Activated CD4-positive, alpha-beta T cell treated with anti-CD3 and anti-CD28 coated beads for 36 hours (primary cell): ENCODE measurements at regions of chr12 and their contacts with region 1.

Region 1: DNA sequence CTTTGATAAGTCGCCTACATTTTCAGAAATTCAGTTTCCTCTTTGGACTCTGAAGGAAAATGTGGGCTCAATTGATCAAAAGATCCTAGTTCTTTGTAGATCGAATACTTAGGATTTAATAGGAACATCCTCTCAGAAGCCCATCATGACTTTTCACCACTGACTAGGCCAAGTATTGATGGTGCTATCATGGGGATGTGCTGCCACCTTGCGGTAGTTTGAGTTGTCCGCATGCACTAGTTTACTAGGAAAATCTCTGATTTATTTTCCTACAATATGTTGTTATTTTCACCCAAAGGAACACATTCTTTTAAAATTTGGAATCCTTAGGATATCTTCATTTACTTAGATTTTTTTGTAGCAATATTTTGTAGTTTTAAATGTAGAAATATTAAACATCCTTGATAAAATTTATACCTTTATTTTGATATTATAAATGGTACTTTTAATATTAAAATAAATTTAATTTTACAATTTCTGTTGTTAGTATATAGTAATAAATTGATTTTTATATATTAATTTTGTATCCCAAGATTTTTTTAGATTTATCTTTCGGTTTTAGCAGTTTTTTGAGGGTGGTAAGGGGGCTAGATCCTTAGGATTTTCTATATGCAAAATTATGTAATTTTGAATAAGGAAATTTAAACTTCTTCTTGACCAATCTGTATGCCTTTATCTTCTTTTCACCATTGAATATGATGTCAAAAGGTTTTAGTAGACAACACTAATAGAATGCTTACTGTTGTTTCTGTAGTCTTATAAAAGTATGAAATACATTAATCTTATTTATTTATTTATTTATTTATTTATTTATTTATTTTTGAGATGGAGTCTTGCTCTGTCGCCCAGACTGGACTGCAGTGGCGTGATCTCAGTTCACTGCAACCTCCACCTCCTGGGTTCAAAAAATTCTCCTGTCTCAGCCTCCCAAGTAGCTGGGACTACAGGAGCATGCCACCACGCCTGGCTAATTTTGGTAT is 52.9 kb upstream of the OR9K2 start:
- DNase-seq: peak; percentile 89
- ATAC-seq: peak; percentile 61
- H3K4me3 Mint-ChIP-seq: no peak overlapping the region
- H3K27ac Mint-ChIP-seq: no peak overlapping the region
- H3K4me1 Mint-ChIP-seq: peaks cover 4% of the 10 kb centered on the region
- H3K27me3 Mint-ChIP-seq: peaks cover 20% of the 10 kb centered on the region

Region 2: DNA sequence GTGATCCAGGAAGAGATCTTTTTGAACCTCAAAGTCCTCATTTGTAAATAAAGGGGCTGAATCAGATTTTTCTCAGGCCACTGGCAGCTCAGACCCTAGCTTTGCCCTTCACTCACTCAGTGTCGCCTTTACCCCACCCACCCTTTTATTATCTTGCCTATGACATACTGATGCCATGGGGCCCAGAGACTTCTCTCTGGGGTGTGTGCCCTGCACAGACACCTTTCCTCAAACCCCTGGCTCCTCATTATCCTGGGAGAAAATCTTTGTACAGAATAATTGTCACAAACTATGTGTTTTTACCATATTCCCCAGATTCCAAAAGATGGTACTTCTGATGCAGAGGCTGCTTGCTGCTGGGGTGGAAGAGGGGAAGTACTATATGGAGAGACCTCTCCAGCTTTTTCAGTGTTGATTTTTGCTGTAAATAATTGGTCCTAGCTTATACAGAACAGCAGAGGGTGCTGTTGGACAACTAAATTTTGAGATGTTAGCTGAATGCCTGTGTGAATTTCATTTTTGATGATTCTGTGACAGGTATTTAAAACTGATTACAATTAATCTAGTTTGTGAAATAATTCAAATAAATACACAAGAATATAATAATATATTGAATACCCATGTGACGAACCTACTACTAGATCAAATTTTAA is 371.3 kb before region 1 on chr12:
- CTCF ChIA-PET with region 1: interaction called, 42 read pairs
- POLR2A ChIA-PET with region 1: no interaction called
- intact Hi-C with region 1: loop called (anchors 1 kb)
- DNase-seq: no peak
- ATAC-seq: peak; percentile 58
- H3K4me3 Mint-ChIP-seq: no peak overlapping the region
- H3K27ac Mint-ChIP-seq: no peak overlapping the region
- H3K4me1 Mint-ChIP-seq: no peaks in the 10 kb centered on the region
- H3K27me3 Mint-ChIP-seq: no peaks in the 10 kb centered on the region

Region 3: GRCh38 chr12:54759751-54760150 is 313.6 kb before region 1 on chr12:
- CTCF ChIA-PET with region 1: interaction called, 28 read pairs
- POLR2A ChIA-PET with region 1: no interaction called
- intact Hi-C with region 1: loop called in 1 of 2 experiments (anchors 1 kb)
- DNase-seq: peak; percentile 22
- ATAC-seq: no peak
- H3K4me3 Mint-ChIP-seq: no peak overlapping the region
- H3K27ac Mint-ChIP-seq: no peak overlapping the region
- H3K4me1 Mint-ChIP-seq: peaks cover 8% of the 10 kb centered on the region
- H3K27me3 Mint-ChIP-seq: peaks cover 7% of the 10 kb centered on the region

Region 4: DNA sequence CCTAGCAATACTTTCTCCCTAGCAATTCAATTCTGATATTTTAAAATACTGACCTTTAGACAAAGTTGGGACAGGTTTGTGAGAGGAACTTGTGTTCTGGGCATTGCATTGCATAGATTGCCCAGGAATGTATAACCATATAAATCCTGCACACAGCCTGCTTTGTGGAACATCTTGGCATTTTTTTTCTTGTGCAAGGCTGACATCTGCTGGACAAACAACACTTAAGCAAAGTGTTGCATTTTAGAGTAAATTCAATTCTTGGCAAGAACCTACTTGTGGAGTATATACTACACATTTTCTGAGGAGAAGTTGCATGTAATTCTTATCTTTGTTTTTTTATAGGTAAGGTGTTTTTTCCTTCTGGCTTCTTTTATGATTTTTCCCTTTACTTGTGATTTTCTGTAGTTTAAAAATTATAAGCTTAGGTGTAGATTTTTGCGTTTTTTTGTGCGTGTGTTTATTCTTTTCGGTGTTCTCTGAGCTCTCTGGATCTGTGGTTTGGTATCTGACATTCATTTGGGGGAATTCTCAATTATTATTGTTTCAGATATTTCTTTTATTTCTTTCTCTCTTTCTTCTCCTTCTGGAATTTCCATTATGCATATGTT is 115.2 kb before region 1 on chr12:
- CTCF ChIA-PET with region 1: interaction called, 26 read pairs
- POLR2A ChIA-PET with region 1: no interaction called
- intact Hi-C with region 1: loop called in 1 of 2 experiments (anchors 1 kb)
- DNase-seq: peak; percentile 65
- ATAC-seq: peak; percentile 20
- H3K4me3 Mint-ChIP-seq: no peak overlapping the region
- H3K27ac Mint-ChIP-seq: peak overlapping the region; percentile 80
- H3K4me1 Mint-ChIP-seq: peaks cover 88% of the 10 kb centered on the region
- H3K27me3 Mint-ChIP-seq: no peaks in the 10 kb centered on the region

Region 5: DNA sequence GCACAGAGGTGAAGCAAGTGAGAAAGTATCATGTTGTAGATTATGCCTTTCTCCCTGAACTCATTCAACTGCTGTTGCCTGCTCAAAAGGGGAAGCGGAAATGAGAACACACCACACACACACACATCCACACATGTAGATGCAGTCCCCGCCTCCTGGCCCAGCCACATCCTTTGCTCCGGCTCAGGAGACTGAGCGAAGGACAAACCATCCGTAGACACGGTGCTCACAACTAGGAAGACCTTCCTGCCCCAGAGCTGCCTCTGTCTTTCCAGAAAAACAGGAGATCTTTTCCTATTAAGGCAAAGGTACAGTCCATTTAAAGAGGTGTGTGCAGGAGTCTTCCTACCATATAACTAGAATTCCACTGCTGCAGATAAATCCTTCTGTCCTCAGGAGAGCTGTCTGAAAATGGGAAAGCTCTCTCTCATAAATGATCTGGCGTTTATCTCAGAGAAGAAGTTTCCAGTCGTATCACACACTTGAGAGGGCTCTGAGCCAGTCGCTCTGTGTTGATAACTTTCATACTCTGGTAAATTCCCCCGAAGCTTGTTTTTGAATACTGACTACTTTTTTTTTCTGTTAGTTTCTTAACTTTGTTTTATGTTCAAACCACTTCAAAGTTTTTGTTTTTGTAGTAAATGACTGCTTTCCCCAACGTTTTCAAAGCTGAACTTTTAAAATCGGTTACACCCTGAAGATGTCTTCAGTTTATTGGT is 88.5 kb before region 1 on chr12 and contains the start of gene TESPA1:
- CTCF ChIA-PET with region 1: interaction called, 19 read pairs
- POLR2A ChIA-PET with region 1: no interaction called
- intact Hi-C with region 1: no loop called
- DNase-seq: peak; percentile 92
- ATAC-seq: peak; percentile 87
- H3K4me3 Mint-ChIP-seq: peak within 1 kb of the TSS; percentile 78
- H3K27ac Mint-ChIP-seq: peak within 1 kb of the TSS; percentile 95
- H3K4me1 Mint-ChIP-seq: peaks cover 64% of the 10 kb centered on the region
- H3K27me3 Mint-ChIP-seq: no peaks in the 10 kb centered on the region
- total RNA-seq, gene TESPA1: 81.0 to 107 TPM

Region 6: DNA sequence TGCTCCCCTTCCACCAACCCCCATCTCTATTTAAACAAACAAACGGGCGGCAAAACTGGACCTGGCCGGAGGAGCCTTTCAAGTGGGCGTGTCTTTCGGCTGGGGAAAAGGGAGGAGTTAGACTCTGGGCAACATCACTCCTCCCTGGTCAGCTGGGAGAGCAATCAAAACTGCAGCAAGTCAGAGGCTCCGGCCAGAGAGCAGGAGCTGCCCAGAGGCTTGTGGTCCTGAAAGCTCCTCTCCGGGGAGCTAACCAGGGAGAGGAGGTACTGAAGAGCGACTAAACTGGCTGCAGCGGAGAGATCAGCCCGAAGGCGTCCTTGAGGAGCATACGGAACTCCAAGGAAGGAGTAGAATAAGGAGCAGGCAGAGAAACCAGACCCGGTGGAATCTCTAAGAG is 53.6 kb before region 1 on chr12 and contains the start of gene NEUROD4:
- CTCF ChIA-PET with region 1: interaction called, 13 read pairs
- POLR2A ChIA-PET with region 1: no interaction called
- intact Hi-C with region 1: no loop called
- DNase-seq: peak; percentile 46
- ATAC-seq: no peak
- H3K4me3 Mint-ChIP-seq: no peak within 1 kb of the TSS
- H3K27ac Mint-ChIP-seq: no peak within 1 kb of the TSS
- H3K4me1 Mint-ChIP-seq: peaks cover 5% of the 10 kb centered on the region
- H3K27me3 Mint-ChIP-seq: peaks cover 27% of the 10 kb centered on the region
- total RNA-seq, gene NEUROD4: not detected

Region 7: DNA sequence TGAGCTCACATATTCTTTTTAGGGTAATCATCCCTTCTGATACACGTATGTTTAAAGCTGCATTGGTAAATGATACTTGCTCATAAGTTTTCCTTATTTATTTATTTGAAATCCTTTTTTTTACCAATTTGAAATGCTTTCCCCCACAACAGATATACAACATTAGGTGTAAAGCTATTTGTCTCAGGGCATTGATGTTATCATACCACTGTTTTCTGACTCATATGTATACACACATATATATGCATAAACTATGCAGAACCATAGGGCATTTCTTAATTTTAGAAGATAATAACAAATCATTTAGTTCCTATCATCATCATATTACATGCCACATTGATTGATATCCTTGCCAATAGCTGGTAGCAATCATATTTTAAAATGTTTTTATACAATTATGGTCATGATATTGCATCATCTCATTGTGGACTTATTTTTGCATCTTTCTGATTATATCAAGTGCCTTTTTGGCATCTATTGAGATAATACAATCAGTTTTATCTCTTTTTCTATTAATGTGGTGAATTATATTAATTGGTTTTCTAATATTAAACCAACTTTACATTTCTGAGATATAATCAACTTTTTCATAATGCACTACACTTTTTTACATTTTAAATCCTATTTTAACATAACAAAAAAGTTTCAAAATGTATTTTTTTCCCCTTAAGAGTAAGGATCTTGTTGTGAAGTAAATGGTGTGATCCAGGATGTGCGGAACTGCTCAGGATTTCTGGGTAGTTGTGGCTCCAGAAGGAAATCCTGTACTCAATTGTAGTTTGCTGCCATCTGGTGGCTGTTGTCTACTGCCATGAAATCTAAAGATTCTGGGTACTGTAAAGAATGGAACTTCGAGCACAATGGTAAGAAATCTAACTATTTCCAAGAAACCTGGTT is 69.6 kb after region 1 on chr12:
- CTCF ChIA-PET with region 1: interaction called, 5 read pairs
- POLR2A ChIA-PET with region 1: no interaction called
- intact Hi-C with region 1: loop called in 1 of 2 experiments (anchors 2 kb)
- DNase-seq: peak; percentile 66
- ATAC-seq: no peak
- H3K4me3 Mint-ChIP-seq: no peak overlapping the region
- H3K27ac Mint-ChIP-seq: no peak overlapping the region
- H3K4me1 Mint-ChIP-seq: peaks cover 4% of the 10 kb centered on the region
- H3K27me3 Mint-ChIP-seq: peaks cover 9% of the 10 kb centered on the region